ENCODE measurements at regions of chr6 and their contacts with region 1.

Region 1: GRCh38 chr6:27518881-27519795 is 46.2 kb upstream of the ZNF184 start:
- DNase-seq: peak in 1 of 2 experiments; percentile 89
- ATAC-seq: peak; percentile 89 to 95
- H3K4me3 ChIP-seq: peak overlapping the region; percentile 87
- H3K27ac ChIP-seq: peak overlapping the region; percentile 73 to 89
- H3K4me1 ChIP-seq: no peaks in the 10 kb centered on the region
- CTCF ChIP-seq: peak; percentile 68
- EP300 ChIP-seq: no peak
- POLR2A ChIP-seq: no peak
- RAD21 ChIP-seq: peak; percentile 45 to 55; a peak in 4 of 5 replicates

Region 2: GRCh38 chr6:27503436-27504030 is 15.6 kb before region 1 on chr6:
- CTCF ChIA-PET with region 1: interaction called, 13 read pairs
- POLR2A ChIA-PET with region 1: no interaction called
- DNase-seq: peak in 1 of 2 experiments; percentile 80
- ATAC-seq: peak; percentile 25 to 47; a peak in 4 of 6 replicates
- H3K4me3 ChIP-seq: peak overlapping the region; percentile 60
- H3K27ac ChIP-seq: peak overlapping the region; percentile 14 to 79; a peak in 4 of 6 replicates
- H3K4me1 ChIP-seq: peaks cover 26% of the 10 kb centered on the region; the same call in 2 of the 3 replicates
- CTCF ChIP-seq: no peak; the same call in 2 of the 3 replicates
- EP300 ChIP-seq: no peak
- POLR2A ChIP-seq: no peak
- RAD21 ChIP-seq: no peak

Region 3: DNA sequence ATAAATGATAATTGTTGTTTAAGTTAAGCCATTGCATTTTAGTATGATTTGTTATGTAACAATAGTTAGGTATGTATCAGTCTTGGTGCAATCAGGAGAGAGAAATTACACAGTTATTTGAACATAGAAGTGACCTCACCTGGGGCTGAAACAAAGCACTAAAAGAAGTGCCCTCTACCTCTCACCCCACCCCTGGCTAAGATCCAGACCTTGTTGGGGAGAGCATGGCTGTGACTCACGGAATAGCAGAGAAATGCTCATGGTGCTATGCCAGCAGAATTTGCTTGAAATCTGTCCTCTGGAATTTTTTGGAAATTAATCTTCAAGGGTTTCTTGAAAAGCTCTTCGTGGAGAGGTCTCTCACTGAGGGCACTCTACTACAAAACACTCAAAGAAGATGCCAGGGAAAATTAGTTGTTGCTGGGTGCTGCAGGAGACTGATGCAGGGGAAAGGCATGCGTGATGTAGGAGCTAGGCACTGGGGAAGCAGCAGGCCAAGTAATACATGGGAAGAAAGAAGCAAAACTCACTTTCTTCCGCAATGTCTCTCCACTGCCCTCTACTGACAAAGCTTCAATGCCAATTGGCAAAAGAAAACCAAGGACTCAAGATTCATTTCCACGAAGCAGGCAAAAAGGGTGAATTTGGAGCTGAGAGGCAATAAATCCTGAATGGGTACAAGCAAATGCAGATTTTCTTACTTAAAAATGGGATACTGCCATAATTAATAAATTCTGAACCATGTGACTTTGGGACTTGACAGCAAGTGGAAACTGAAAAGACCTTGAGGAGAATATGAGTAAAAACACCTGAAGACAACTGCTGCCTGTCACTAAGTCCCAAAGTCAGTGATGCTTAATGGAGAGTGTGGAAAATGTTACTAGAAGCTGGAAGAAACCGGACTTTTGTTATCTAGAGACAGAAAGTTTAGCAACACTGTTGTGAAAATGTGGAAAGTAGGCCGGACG is 90.1 kb after region 1 on chr6:
- CTCF ChIA-PET with region 1: interaction called, 11 read pairs
- POLR2A ChIA-PET with region 1: interaction called, 4 read pairs
- DNase-seq: peak in 1 of 2 experiments; percentile 78
- ATAC-seq: peak; percentile 44; a peak in 5 of 6 replicates
- H3K4me3 ChIP-seq: no peak overlapping the region
- H3K27ac ChIP-seq: peak overlapping the region in 1 of 2 experiments; percentile 57; a peak in 3 of 6 replicates
- H3K4me1 ChIP-seq: peaks cover 10% of the 10 kb centered on the region; the same call in 2 of the 3 replicates
- CTCF ChIP-seq: peak; percentile 71
- EP300 ChIP-seq: no peak
- POLR2A ChIP-seq: no peak
- RAD21 ChIP-seq: peak; percentile 67

Region 4: GRCh38 chr6:27753668-27754407 is 234.7 kb after region 1 on chr6:
- CTCF ChIA-PET with region 1: interaction called, 13 read pairs
- POLR2A ChIA-PET with region 1: no interaction called
- DNase-seq: peak; percentile 70 to 91
- ATAC-seq: peak; percentile 89 to 92
- H3K4me3 ChIP-seq: peak overlapping the region; percentile 64
- H3K27ac ChIP-seq: peak overlapping the region; percentile 33 to 40; a peak in 2 of 6 replicates
- H3K4me1 ChIP-seq: peaks cover 5% of the 10 kb centered on the region; the same call in 1 of the 3 replicates
- CTCF ChIP-seq: no peak
- EP300 ChIP-seq: no peak
- POLR2A ChIP-seq: no peak
- RAD21 ChIP-seq: no peak